Mammary epithelial cell (primary cell): ENCODE measurements at regions of chr7 and their contacts with region 1.

Region 1: GRCh38 chr7:102211590-102212550 is 74.8 kb upstream of the SH2B2 start:
- DNase-seq: no peak
- H3K4me3 ChIP-seq: no peak overlapping the region
- H3K27ac ChIP-seq: no peak overlapping the region
- H3K4me1 ChIP-seq: no peaks in the 10 kb centered on the region
- H3K27me3 ChIP-seq: no peaks in the 10 kb centered on the region
- CTCF ChIP-seq: no peak

Region 2: GRCh38 chr7:101936611-101937231 is 275.1 kb before region 1 on chr7:
- CTCF ChIA-PET with region 1: no interaction called
- dilution Hi-C with region 1: loop called (anchors 5 kb)
- in situ Hi-C with region 1: no loop called
- intact Hi-C with region 1: no loop called
- DNase-seq: no peak
- H3K4me3 ChIP-seq: no peak overlapping the region
- H3K27ac ChIP-seq: no peak overlapping the region
- H3K4me1 ChIP-seq: peaks cover 10% of the 10 kb centered on the region
- H3K27me3 ChIP-seq: no peaks in the 10 kb centered on the region
- CTCF ChIP-seq: no peak

Region 3: DNA sequence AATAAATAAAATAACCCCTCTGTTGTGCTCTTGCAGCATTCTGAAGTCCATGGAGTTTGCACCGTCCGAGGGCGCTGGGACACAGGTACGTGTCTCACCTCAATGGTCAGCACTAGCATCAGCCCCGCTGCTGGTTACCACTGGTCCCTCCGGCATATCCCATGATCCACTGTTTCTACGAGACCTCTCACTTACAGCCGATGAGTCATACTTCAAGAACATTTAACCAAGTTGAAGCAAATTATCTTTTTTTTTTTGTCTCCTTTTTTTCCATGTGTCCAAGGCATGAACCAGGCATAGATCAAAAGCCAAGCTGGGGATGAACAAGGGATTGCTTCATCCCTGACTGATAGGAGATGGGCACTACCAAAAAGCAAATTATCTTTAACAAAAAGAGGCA is 18.1 kb before region 1 on chr7:
- CTCF ChIA-PET with region 1: no interaction called
- dilution Hi-C with region 1: no loop called
- in situ Hi-C with region 1: no loop called
- intact Hi-C with region 1: no loop called
- DNase-seq: no peak
- H3K4me3 ChIP-seq: no peak overlapping the region
- H3K27ac ChIP-seq: no peak overlapping the region
- H3K4me1 ChIP-seq: no peaks in the 10 kb centered on the region
- H3K27me3 ChIP-seq: no peaks in the 10 kb centered on the region
- CTCF ChIP-seq: no peak